H1 (cell line): ENCODE measurements at regions of chr1 and their contacts with region 1.

Region 1: DNA sequence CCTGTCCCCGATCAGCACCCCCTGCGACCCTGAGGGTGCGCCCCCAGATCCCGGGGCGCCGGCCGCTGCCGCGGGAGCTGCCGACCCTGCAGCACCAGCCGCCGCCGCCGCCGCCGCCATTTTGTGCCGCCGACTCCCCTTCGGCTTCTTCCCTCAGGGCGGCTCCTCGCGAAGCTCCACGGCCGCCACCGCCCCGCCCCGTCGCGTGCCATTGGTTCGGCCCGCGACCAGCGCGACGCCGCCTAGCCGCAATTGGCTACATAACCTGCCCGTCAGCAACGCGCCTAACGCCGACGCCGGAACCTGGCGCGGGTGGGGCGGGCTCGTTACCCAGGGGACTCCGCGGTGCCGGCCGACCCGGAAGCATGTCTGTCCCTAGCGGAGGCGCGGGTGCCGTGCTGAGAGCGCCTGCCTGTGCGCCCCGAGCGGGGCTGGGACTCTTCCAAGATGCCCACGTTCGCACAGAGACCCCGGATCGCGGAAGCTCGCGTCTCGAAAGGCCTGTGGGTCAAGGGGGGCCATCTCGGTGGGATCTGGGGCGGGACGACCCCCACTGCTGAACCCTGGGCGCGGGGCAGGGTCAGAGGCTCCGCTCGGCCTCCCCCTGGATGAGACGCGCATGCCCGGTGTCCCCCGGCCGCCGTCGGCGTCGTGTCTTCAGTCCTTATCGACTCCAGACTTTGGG is at the start of gene CCNL2:
- DNase-seq: peak; percentile 94 to 99
- H3K4me3 ChIP-seq: peak within 1 kb of the TSS; percentile 93 to 95 (median 94)
- H3K27ac ChIP-seq: peak within 1 kb of the TSS; percentile 89
- H3K4me1 ChIP-seq: peaks cover 0 to 18% (median 13%) of the 10 kb centered on the region in 4 experiments; a peak in 6 of 7 replicates
- H3K27me3 ChIP-seq: no peaks in the 10 kb centered on the region
- CTCF ChIP-seq: peak in 2 of 3 experiments; percentile 59 to 60; a peak in 3 of 4 replicates
- EP300 ChIP-seq: no peak
- POLR2A ChIP-seq: peak in 1 of 2 experiments; percentile 66; a peak in 1 of 3 replicates
- RAD21 ChIP-seq: peak; percentile 6 to 24; a peak in 2 of 4 replicates
- total RNA-seq, gene CCNL2: 120 TPM in 2 replicates

Region 2: DNA sequence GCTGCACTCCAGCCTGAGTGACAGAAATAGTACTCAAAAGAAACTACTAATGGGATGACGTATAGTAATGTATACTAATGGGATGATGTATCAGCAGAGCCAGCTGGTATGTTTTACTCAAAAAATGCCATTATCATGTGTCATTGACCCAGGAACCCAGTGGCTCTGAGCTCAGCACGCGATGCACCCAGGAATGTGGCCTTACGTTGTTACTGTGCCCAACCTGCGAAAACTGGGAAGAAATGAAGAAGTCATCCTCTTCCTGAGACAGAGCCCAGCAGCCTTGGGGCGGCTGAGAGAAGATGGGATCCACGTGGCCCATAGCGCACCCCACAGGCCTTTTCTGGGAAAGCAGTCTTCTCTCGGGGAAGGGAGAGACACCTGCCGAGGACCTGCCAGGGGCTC is 134.5 kb before region 1 on chr1:
- CTCF ChIA-PET with region 1: no interaction called
- POLR2A ChIA-PET with region 1: no interaction called
- DNase-seq: peak in 1 of 2 experiments; percentile 84
- H3K4me3 ChIP-seq: no peak overlapping the region
- H3K27ac ChIP-seq: no peak overlapping the region
- H3K4me1 ChIP-seq: no peaks in the 10 kb centered on the region
- H3K27me3 ChIP-seq: no peaks in the 10 kb centered on the region
- CTCF ChIP-seq: peak; percentile 68 to 85 (median 69)
- EP300 ChIP-seq: no peak
- POLR2A ChIP-seq: no peak
- RAD21 ChIP-seq: peak; percentile 70 to 72

Region 3: GRCh38 chr1:1387098-1388077 is 11.9 kb before region 1 on chr1:
- CTCF ChIA-PET with region 1: interaction called, 20 read pairs
- POLR2A ChIA-PET with region 1: interaction called, 719 read pairs
- DNase-seq: no peak
- H3K4me3 ChIP-seq: no peak overlapping the region
- H3K27ac ChIP-seq: no peak overlapping the region
- H3K4me1 ChIP-seq: no peaks in the 10 kb centered on the region; a peak in 2 of 7 replicates
- H3K27me3 ChIP-seq: no peaks in the 10 kb centered on the region
- CTCF ChIP-seq: no peak
- EP300 ChIP-seq: no peak
- POLR2A ChIP-seq: no peak
- RAD21 ChIP-seq: no peak

Region 4: GRCh38 chr1:1419642-1420384 is 20.5 kb after region 1 on chr1:
- CTCF ChIA-PET with region 1: interaction called, 32 read pairs
- POLR2A ChIA-PET with region 1: interaction called, 515 read pairs
- DNase-seq: no peak
- H3K4me3 ChIP-seq: peak overlapping the region; percentile 7 to 50 (median 26); a peak in 6 of 8 replicates
- H3K27ac ChIP-seq: no peak overlapping the region; the same call in 1 of the 2 replicates
- H3K4me1 ChIP-seq: peaks cover 0 to 29% (median 23%) of the 10 kb centered on the region in 4 experiments; a peak in 6 of 7 replicates
- H3K27me3 ChIP-seq: no peaks in the 10 kb centered on the region; a peak in 2 of 7 replicates
- CTCF ChIP-seq: no peak; a peak in 1 of 4 replicates
- EP300 ChIP-seq: no peak
- POLR2A ChIP-seq: no peak
- RAD21 ChIP-seq: no peak; a peak in 1 of 4 replicates

Region 5: DNA sequence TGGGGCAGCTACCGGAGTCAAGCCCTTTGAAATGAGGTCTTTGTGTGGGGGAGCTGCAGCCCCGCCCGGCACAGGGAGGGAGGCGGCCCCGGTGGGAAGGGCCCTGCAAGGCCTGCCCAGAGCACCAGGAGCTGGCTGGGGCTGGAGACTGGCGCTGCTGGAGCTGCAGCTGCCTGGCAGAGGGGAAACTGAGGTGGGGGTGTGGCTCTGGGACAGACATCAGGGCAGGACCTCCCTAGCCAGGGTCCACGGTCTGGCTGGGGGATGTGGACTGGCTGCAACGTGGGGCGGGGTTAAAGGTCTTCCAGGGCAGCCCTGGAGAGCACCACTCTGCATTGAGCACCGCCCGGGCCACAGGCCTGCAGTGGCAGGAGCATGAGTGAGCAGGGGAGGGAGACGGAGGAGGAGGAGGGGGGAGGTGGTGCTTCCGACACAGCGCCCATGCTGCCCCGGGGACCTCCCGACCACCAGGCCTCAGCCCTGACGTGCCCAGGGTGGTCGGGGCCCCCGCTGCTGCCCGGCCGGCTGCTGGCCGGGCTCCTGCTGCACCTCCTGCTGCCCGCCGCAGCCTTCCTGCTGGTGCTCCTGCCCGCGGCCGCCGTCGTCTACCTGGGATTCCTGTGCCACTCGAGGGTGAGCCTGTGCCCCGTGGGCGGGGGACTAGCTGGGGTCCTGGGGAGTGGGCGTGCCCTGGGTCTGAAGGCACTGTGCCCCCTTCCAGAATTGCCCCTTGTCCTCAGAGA is 26.6 kb after region 1 on chr1:
- CTCF ChIA-PET with region 1: interaction called, 10 read pairs
- POLR2A ChIA-PET with region 1: interaction called, 515 read pairs
- DNase-seq: peak in 1 of 2 experiments; percentile 73
- H3K4me3 ChIP-seq: peak overlapping the region in 3 of 4 experiments; percentile 11 to 38 (median 14); a peak in 4 of 8 replicates
- H3K27ac ChIP-seq: no peak overlapping the region
- H3K4me1 ChIP-seq: peaks cover 0 to 39% (median 27%) of the 10 kb centered on the region in 4 experiments; a peak in 6 of 7 replicates
- H3K27me3 ChIP-seq: no peaks in the 10 kb centered on the region; a peak in 1 of 7 replicates
- CTCF ChIP-seq: no peak
- EP300 ChIP-seq: no peak
- POLR2A ChIP-seq: no peak
- RAD21 ChIP-seq: no peak

Region 6: DNA sequence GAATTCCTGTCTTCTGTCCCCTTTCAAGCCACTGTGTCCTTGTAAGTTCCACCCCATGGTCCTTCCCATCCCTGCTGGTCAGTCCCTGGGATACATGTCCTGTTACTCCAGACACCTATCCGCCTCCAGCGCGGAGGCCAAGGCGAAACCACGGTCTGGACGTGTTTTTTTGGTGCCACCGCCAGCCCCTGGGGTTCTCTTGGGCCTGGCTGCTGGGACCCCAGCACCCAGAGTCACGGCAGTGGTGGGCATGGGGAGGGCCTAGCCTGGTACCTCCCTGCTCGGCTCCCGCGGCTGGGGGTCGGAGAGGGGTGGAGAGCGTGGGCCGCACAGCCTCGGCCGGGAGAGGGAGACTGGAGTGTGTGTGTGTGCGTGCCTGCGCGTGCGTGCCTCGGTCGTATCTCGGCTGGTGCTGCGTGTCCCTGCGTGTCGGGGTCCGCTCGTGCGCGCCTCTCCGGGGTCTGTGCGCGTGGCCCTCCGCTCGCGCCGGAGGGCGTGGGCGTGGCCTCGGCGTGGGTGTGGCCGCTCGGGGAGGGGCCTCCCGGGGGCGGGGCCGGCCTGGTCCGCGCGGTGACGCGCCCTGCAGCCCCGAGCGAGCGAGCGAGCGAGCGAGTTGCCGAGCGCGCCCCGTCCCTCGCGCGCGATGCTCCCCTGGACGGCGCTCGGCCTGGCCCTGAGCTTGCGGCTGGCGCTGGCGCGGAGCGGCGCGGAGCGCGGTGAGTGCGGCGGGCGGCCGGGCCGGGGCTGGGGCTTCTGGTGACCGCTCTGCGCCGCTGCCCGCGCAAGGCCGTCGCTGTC is 36.0 kb after region 1 on chr1 and contains the start of gene VWA1:
- CTCF ChIA-PET with region 1: interaction called, 20 read pairs
- POLR2A ChIA-PET with region 1: interaction called, 515 read pairs
- DNase-seq: peak in 1 of 2 experiments; percentile 86
- H3K4me3 ChIP-seq: peak within 1 kb of the TSS; percentile 46 to 72 (median 70)
- H3K27ac ChIP-seq: peak within 1 kb of the TSS; percentile 17; the same call in 1 of the 2 replicates
- H3K4me1 ChIP-seq: peaks cover 0 to 54% (median 41%) of the 10 kb centered on the region in 4 experiments; a peak in 6 of 7 replicates
- H3K27me3 ChIP-seq: peaks cover 0 to 3% (median 0%) of the 10 kb centered on the region in 4 experiments; a peak in 2 of 7 replicates
- CTCF ChIP-seq: no peak
- EP300 ChIP-seq: no peak
- POLR2A ChIP-seq: no peak
- RAD21 ChIP-seq: no peak
- total RNA-seq, gene VWA1: 36.6 and 42.0 TPM in 2 replicates

Region 7: DNA sequence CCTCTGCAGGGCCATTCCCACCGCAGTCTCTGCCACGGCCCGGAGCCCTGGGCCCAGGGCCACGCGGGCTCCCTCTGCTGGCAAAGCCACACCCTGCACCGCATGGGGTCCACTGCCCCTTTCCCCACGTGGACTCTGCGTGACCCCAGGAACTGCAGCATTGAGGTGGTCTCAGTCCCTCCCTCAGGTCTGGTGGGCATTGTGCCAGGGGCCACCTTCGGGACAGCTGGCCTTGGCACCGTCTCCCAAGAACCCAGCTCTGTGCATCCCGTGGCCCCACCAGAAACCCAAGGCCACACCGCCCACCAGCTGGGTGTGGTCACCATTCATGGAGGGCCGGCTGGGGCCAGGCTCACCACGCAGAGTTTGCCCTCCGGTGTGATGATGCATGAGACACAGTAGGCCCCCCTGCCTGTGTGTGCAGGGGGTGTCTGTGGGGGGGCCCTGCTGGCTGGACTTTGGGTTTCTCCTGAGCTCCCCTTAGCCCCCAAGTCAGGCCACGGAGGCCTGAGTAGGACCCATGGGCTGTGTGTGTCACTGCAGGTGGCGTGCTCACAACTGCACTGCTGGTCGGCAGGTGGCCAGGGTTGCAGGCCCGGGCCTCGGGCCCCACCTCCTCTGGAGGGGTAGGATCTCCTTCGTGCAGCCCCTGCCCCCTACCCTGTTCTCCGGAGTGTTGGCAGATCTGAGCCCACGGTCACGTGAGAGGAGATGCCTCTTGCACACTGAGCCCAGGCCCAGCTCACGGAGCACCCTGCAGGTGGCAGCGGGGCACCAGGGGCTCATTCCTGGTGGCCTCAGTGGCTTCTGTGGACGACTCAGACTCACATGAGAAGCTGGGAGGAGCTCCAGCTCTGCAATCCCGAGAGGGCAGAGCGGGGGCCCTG is 41.9 kb after region 1 on chr1:
- CTCF ChIA-PET with region 1: interaction called, 20 read pairs
- POLR2A ChIA-PET with region 1: interaction called, 515 read pairs
- DNase-seq: peak in 1 of 2 experiments; percentile 87
- H3K4me3 ChIP-seq: no peak overlapping the region
- H3K27ac ChIP-seq: no peak overlapping the region
- H3K4me1 ChIP-seq: peaks cover 0 to 4% (median 3%) of the 10 kb centered on the region in 4 experiments; a peak in 5 of 7 replicates
- H3K27me3 ChIP-seq: peaks cover 0 to 3% (median 0%) of the 10 kb centered on the region in 4 experiments; a peak in 2 of 7 replicates
- CTCF ChIP-seq: peak in 2 of 3 experiments; percentile 73 to 76; a peak in 3 of 4 replicates
- EP300 ChIP-seq: no peak
- POLR2A ChIP-seq: no peak
- RAD21 ChIP-seq: peak; percentile 61 to 72